ENCODE measurements at regions of chr11 and their contacts with region 1.

Region 1: DNA sequence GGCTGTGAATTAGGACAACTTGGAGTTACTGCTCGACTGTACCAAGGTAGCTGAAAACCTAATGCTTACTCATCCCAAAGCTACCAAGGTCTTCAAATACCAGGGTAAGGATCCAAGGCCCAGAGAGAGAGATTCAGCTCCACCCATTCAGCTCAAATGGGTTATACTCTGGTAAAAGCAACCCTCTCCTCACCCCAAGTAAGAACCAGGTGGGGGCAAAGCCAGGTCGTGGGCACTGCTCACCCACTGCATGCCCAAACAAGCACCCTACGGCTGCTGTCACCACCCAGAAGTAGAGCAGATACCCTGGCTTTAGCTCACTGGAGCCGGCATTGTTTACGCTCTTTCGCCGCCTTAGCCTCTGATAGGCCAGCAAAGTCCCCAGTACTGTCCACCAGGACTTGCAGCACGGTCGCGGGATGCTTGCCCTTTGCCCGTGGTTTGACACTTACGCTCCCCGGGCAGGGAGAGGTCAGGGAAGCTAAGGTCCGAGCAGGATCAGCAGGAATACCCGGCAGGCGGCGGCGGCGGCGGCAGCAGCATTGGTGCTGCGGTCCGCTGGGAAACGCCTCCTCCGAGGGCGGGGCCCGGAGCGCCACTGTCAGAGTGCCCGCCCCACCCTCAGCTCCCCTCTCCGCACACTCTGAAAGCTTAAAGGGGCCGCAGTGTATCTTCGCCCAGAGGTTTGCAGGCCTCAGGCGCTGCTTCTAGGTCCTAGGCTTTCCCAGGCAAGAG is 19.6 kb downstream of the CKAP5 start:
- DNase-seq: peak; percentile 69
- H3K4me3 Mint-ChIP-seq: peak overlapping the region; percentile 48
- H3K27ac Mint-ChIP-seq: no peak overlapping the region
- H3K4me1 Mint-ChIP-seq: peaks cover 20% of the 10 kb centered on the region
- H3K27me3 Mint-ChIP-seq: no peaks in the 10 kb centered on the region

Region 2: DNA sequence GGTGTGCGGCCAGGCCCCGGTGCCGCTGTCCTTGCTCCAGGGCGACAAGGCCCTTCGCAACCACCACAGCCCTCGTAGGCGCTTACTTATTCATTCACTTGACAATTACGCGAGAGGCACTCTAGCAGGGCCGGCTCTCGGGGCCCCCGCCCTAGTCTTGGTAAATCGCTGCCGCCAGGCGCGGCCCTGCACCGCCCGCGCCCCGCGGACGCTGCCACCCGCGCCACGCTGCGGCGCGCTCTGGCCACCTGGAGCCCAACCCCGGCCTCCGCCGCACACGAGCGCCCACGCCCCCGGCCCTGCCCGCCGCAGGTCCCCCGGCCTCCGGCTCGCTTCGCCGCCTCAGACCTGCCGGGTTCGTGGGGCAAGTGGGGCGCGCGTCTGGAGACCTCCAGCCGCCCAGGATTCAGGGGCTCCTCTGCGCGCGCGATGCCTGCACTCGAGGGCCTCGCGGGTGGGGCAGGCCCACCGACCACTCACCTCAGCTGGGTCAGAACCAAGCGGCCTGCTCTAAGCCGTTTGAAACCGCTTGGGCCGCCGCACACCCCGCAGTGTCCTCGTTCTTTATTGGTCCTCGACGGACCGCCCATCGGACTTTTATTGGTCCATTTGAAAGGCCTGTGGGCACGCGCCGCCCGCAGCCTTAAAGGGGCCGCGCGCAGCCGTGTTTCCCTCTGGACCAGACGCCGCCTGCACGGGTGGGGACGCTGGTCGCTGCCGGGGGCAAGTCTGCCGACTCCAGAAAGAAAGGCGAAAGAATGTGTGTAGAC is 19.4 kb after region 1 on chr11 and contains the start of gene CKAP5:
- CTCF ChIA-PET with region 1: interaction called, 3 read pairs
- POLR2A ChIA-PET with region 1: no interaction called
- intact Hi-C with region 1: loop called (anchors 2 kb)
- DNase-seq: peak; percentile 92
- H3K4me3 Mint-ChIP-seq: peak within 1 kb of the TSS; percentile 93
- H3K27ac Mint-ChIP-seq: peak within 1 kb of the TSS; percentile 91
- H3K4me1 Mint-ChIP-seq: peaks cover 26% of the 10 kb centered on the region
- H3K27me3 Mint-ChIP-seq: no peaks in the 10 kb centered on the region
- total RNA-seq, gene CKAP5: 174 TPM